ENCODE measurements at regions of chr12 and their contacts with region 1.

Region 1: GRCh38 chr12:95858479-95859343 is at the start of gene SNRPF:
- DNase-seq: peak; percentile 93
- H3K4me3 Mint-ChIP-seq: no peak within 1 kb of the TSS
- H3K27ac Mint-ChIP-seq: no peak within 1 kb of the TSS
- H3K4me1 Mint-ChIP-seq: peaks cover 12% of the 10 kb centered on the region
- H3K27me3 Mint-ChIP-seq: peaks cover 5% of the 10 kb centered on the region
- total RNA-seq, gene SNRPF: 65.6 and 70.9 TPM in 2 replicates

Region 2: DNA sequence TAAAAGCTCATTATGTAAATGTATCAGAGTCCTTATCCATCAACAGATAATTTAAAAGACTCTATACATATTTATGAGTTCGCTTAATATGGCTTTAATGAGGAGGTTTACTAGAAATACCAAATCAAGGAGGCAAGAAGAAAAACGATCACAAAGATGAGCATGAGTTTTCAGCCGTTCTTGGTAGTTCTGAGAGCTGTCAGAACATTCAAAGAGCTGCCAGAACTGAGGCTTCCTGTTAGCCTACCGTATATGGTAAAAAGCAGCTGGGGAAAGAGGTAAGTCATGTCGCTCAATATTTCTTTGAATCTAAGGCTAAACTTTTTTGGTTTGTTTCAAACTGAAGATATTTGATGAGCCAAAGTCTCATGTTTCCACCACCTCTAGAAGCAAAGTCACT is 1825.6 kb before region 1 on chr12:
- intact Hi-C with region 1: no loop called
- DNase-seq: no peak
- H3K4me3 Mint-ChIP-seq: no peak overlapping the region
- H3K27ac Mint-ChIP-seq: no peak overlapping the region
- H3K4me1 Mint-ChIP-seq: peaks cover 34% of the 10 kb centered on the region
- H3K27me3 Mint-ChIP-seq: no peaks in the 10 kb centered on the region

Region 3: GRCh38 chr12:95003213-95003920 is 855.3 kb before region 1 on chr12 and contains the start of gene NDUFA12:
- intact Hi-C with region 1: loop called (anchors 1 kb)
- DNase-seq: peak; percentile 94
- H3K4me3 Mint-ChIP-seq: peak within 1 kb of the TSS; percentile 95
- H3K27ac Mint-ChIP-seq: peak within 1 kb of the TSS; percentile 93
- H3K4me1 Mint-ChIP-seq: peaks cover 30% of the 10 kb centered on the region
- H3K27me3 Mint-ChIP-seq: no peaks in the 10 kb centered on the region
- total RNA-seq, gene NDUFA12: 113 TPM in 2 replicates

Region 4: GRCh38 chr12:95217377-95218149 is 641.1 kb before region 1 on chr12 and contains the starts of genes FGD6 and VEZT:
- intact Hi-C with region 1: loop called (anchors 2 kb)
- DNase-seq: peak; percentile 98
- H3K4me3 Mint-ChIP-seq: peak within 1 kb of the TSS; percentile 97
- H3K27ac Mint-ChIP-seq: peak within 1 kb of the TSS; percentile 98
- H3K4me1 Mint-ChIP-seq: peaks cover 37% of the 10 kb centered on the region
- H3K27me3 Mint-ChIP-seq: peaks cover 9% of the 10 kb centered on the region
- total RNA-seq, gene FGD6: 0.64 and 0.86 TPM in 2 replicates
- total RNA-seq, gene VEZT: 58.1 and 64.7 TPM in 2 replicates

Region 5: GRCh38 chr12:95790033-95790911 is 68.4 kb before region 1 on chr12 and contains the start of gene NTN4:
- intact Hi-C with region 1: loop called (anchors 2 kb)
- DNase-seq: no peak
- H3K4me3 Mint-ChIP-seq: peak within 1 kb of the TSS; percentile 76
- H3K27ac Mint-ChIP-seq: no peak within 1 kb of the TSS
- H3K4me1 Mint-ChIP-seq: peaks cover 10% of the 10 kb centered on the region
- H3K27me3 Mint-ChIP-seq: peaks cover 76% of the 10 kb centered on the region
- total RNA-seq, gene NTN4: not detected in 2 replicates

Region 6: DNA sequence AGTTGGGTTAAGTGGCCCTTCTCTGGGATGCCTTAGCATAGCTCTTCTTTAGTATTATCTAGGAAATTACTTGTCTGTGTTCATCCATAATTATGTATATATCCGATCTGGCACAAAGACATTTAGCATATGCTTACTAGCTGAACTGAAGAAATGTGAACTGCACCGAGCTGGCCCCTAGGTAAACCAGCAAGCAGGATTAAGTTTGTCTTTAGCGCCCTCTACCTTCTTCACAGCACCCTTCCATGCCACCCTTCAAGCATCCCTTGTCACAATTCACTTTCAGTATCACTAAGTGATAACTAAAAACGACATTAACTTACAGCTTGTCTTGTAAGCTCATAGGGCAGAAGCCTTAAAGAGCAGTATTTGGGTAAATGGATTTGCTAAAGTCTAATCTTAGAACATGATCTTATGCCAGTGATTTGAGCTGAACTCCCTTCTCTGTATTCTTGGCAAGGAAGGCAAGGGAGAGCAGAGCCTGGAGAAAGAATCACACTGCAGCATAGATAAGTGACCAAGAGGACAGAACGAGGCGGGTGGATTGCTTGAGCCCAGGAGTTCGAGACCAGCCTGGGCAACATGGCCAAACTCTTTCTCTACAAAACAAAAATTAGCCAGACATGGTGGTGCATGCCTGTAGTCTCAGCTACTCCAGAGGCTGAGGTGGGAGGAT is 140.0 kb after region 1 on chr12:
- intact Hi-C with region 1: loop called (anchors 1 kb)
- DNase-seq: peak; percentile 42
- H3K4me3 Mint-ChIP-seq: no peak overlapping the region
- H3K27ac Mint-ChIP-seq: peak overlapping the region; percentile 20
- H3K4me1 Mint-ChIP-seq: peaks cover 18% of the 10 kb centered on the region
- H3K27me3 Mint-ChIP-seq: no peaks in the 10 kb centered on the region

Region 7: GRCh38 chr12:96399919-96400797 is 541.4 kb after region 1 on chr12 and contains the start of gene CDK17:
- intact Hi-C with region 1: loop called (anchors 5 kb)
- DNase-seq: peak; percentile 83
- H3K4me3 Mint-ChIP-seq: peak within 1 kb of the TSS; percentile 93
- H3K27ac Mint-ChIP-seq: peak within 1 kb of the TSS; percentile 97
- H3K4me1 Mint-ChIP-seq: peaks cover 66% of the 10 kb centered on the region
- H3K27me3 Mint-ChIP-seq: no peaks in the 10 kb centered on the region
- total RNA-seq, gene CDK17: 32.4 and 37.1 TPM in 2 replicates